ENCODE measurements at regions of chr6 and their contacts with region 1.

Region 1: DNA sequence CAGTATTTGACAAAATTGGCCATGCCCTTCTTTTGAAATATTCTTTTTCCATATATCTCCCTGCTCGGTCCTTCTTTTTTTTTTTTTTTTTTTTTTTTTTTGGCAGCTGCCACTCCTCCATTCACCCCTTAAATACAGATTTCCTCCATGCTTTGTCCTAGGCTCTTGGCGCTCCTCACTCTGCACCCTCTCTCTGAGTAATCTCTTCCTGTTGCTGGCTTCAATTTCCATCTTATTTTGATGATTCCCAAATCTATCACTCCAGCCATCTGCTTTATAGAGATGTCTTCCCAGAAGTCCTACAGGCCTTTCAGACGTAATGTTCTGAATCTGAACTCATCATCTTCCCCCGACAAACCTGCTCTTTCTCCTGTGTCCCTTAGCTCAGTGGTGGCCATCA is 12.8 kb upstream of the KLHL32 start:
- DNase-seq: no peak
- ATAC-seq: no peak

Region 2: DNA sequence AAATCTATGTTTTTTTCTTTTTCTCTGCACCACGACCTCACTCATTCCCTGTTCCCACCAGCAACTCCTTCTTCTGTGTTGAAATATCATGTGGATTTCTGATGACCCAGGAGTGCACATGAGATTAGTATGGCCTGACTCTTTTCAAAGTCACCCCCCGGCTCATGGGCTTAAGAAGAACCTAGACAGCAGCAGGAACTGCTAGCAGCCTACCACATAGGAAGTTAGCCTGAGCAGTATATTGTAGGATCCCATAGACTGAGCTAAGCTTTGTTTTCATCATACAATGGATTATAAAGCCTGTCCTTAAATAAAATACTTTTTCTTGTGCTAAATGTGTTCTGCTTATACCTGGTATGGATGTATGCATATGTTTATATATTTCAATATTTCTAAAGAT is 19.4 kb after region 1 on chr6:
- intact Hi-C with region 1: loop called (anchors 1 kb)
- DNase-seq: no peak
- ATAC-seq: no peak

Region 3: GRCh38 chr6:97215157-97215769 is 303.5 kb after region 1 on chr6:
- intact Hi-C with region 1: no loop called
- DNase-seq: no peak
- ATAC-seq: peak; percentile 72